ENCODE measurements at regions of chr1 and their contacts with region 1.

Region 1: GRCh38 chr1:55124470-55124869 is 85.1 kb downstream of the PCSK9 start:
- DNase-seq: no peak
- ATAC-seq: no peak
- H3K4me3 ChIP-seq: no peak overlapping the region
- H3K27ac ChIP-seq: no peak overlapping the region
- H3K4me1 ChIP-seq: peaks cover 5% of the 10 kb centered on the region
- H3K27me3 ChIP-seq: no peaks in the 10 kb centered on the region
- CTCF ChIP-seq: no peak
- POLR2A ChIP-seq: no peak
- RAD21 ChIP-seq: no peak

Region 2: GRCh38 chr1:55088413-55088812 is 36.1 kb before region 1 on chr1:
- CTCF ChIA-PET with region 1: no interaction called
- POLR2A ChIA-PET with region 1: no interaction called
- dilution Hi-C with region 1: no loop called
- in situ Hi-C with region 1: no loop called
- intact Hi-C with region 1: loop called (anchors 5 kb)
- DNase-seq: no peak
- ATAC-seq: no peak
- H3K4me3 ChIP-seq: no peak overlapping the region
- H3K27ac ChIP-seq: no peak overlapping the region
- H3K4me1 ChIP-seq: no peaks in the 10 kb centered on the region
- H3K27me3 ChIP-seq: no peaks in the 10 kb centered on the region
- CTCF ChIP-seq: no peak
- POLR2A ChIP-seq: no peak
- RAD21 ChIP-seq: no peak

Region 3: DNA sequence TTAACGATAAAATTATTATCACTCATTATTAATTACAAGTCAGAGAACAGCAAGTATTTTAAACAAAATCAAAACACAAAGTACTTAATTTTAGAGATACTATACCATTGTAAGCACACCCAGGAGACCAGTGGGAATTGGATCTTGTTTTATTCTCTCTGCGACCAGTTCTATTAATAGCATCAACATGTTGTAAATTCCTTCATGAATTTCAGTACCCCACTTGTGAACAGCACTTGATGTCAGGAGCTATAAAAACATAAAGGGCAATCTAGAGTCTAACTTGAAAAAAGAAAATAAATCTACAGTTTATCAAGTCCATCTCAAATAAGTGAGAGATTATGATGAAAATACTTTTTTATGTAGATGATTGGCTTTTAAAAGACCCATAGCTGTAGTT is 47.8 kb after region 1 on chr1:
- CTCF ChIA-PET with region 1: no interaction called
- POLR2A ChIA-PET with region 1: no interaction called
- dilution Hi-C with region 1: no loop called
- in situ Hi-C with region 1: no loop called
- intact Hi-C with region 1: no loop called
- DNase-seq: no peak
- ATAC-seq: no peak
- H3K4me3 ChIP-seq: no peak overlapping the region
- H3K27ac ChIP-seq: no peak overlapping the region
- H3K4me1 ChIP-seq: no peaks in the 10 kb centered on the region; the same call in 1 of the 2 replicates
- H3K27me3 ChIP-seq: no peaks in the 10 kb centered on the region
- CTCF ChIP-seq: no peak
- POLR2A ChIP-seq: no peak
- RAD21 ChIP-seq: no peak